Pancreas (tissue), 10 donors: ENCODE measurements at regions of chr5 and their contacts with region 1.

Region 1: GRCh38 chr5:849651-850301 is 1.0 kb downstream of the ZDHHC11 start:
- DNase-seq: peak in 2 of 6 donors; percentile 41 to 64
- ATAC-seq: peak in 3 of 4 donors; percentile 26 to 52 (median 46)
- H3K4me3 ChIP-seq: no peak overlapping the region
- H3K27ac ChIP-seq: no peak overlapping the region
- H3K4me1 ChIP-seq: no peaks in the 10 kb centered on the region
- H3K27me3 ChIP-seq: peaks cover 0 to 3% (median 0%) of the 10 kb centered on the region in 4 donors
- CTCF ChIP-seq: no peak

Region 2: DNA sequence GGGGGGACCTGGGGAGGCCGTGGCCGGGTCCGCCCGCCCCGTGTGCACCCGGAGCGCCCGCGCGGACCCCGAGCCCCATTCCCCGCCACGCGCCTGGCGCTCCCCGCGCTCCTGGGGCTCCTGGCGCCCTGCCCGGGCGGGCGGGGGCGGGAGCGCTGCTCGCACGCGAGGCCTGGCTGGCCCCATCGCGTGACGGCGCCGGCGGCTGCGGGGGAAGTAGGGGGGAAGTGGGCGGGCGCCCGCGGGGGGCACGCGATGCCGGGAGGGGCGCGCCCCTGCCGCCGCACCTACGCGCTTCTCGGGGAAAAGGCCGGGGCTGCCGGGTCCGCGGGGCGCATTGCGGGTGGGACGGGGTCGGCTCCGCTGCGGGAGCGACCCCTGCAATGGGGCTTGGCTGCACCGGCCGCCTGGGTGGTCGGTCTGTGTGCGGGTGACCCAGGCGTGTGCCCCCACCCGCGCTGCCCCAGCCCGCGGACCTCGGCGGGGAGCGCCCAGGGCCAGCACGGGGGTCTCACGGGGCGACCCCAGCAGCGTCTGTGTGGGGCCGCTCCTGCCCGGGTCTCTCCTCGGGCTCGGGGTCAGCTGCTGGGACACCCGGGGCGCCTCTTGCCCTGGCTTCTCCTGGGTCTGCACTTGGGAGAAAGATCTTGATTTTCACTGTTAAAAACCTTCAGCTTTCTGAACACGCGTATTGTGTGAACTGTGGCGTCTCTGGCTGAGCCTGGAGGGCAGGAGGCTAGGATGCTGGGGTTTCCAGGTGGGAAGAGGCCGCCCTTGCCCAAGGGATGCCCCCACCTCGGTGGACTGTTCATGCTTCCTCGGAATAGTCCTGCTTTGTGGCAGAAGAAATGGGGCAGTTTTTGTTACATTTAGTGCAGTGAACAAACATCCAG is 475.8 kb before region 1 on chr5:
- intact Hi-C with region 1: no loop called
- DNase-seq: peak in 2 of 6 donors; percentile 2 to 56
- ATAC-seq: peak in 2 of 4 donors; percentile 26 to 71
- H3K4me3 ChIP-seq: peak overlapping the region in 2 of 4 donors; percentile 16 to 40
- H3K27ac ChIP-seq: no peak overlapping the region
- H3K4me1 ChIP-seq: no peaks in the 10 kb centered on the region
- H3K27me3 ChIP-seq: no peaks in the 10 kb centered on the region
- CTCF ChIP-seq: no peak

Region 3: DNA sequence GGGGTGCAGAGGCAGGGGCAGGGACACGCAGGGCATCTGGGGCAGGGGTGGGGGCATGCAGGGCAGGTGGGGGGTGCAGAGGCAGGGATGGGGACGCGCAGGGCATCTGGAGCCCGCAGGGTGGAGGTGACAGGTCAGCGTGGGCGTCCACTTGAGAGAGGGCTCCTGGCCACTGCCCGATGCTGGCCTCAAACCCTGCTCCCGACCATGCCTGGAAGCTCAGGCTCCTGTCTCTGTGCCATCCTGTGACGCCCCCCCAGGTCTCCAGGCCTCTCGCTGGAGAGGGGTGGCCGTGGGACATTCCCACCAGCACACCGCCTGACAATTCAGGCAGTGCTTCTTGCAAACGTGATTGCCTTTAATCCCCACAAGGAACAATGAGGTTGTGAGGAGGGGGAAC is 98.3 kb before region 1 on chr5:
- intact Hi-C with region 1: loop called in 2 of 3 experiments (anchors 5 to 10 kb)
- DNase-seq: peak in 2 of 6 donors; percentile 6 to 23
- ATAC-seq: no peak
- H3K4me3 ChIP-seq: no peak overlapping the region
- H3K27ac ChIP-seq: no peak overlapping the region
- H3K4me1 ChIP-seq: no peaks in the 10 kb centered on the region
- H3K27me3 ChIP-seq: no peaks in the 10 kb centered on the region
- CTCF ChIP-seq: no peak

Region 4: GRCh38 chr5:759111-759751 is 90.5 kb before region 1 on chr5:
- intact Hi-C with region 1: loop called (anchors 5 to 10 kb)
- DNase-seq: peak; percentile 73 to 89 (median 81)
- ATAC-seq: peak; percentile 90 to 96 (median 93)
- H3K4me3 ChIP-seq: no peak overlapping the region
- H3K27ac ChIP-seq: peak overlapping the region in 2 of 4 donors; percentile 19 to 38
- H3K4me1 ChIP-seq: peaks cover 5 to 16% (median 7%) of the 10 kb centered on the region in 3 donors
- H3K27me3 ChIP-seq: no peaks in the 10 kb centered on the region
- CTCF ChIP-seq: no peak